ENCODE measurements at regions of chr12 and their contacts with region 1.

Region 1: DNA sequence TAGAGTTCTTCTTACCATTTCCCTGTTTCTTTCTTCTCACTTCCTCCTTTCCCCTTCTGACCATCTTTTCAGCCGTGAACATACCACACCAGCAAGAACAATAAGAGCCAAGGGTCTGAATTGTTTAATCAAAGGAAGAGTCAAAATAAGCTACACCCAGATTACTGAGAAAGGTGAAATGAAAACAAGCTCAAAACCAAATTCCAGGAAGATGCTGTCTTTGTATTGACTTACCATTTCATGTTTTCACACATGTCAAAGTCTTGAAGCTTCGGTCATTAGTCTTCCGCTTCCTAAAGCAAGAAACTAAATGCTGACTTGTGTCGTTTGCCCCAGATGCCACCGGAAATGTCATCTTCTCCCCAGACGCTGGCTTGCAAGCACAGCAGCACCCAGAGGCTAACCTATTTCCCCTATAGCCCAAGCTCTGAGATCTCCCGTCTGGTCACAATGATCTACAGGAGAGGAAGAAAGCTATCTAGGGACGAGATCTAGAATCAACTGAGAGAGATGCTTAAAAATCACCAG is 136.5 kb upstream of the AMIGO2 start:
- DNase-seq: peak; percentile 62 to 88
- ATAC-seq: peak; percentile 74 to 90 (median 86)
- H3K4me3 ChIP-seq: peak overlapping the region; percentile 69
- H3K4me3 Mint-ChIP-seq: peak overlapping the region; percentile 96
- H3K27ac ChIP-seq: peak overlapping the region; percentile 87
- H3K27ac Mint-ChIP-seq: peak overlapping the region; percentile 97 to 99
- H3K4me1 ChIP-seq: peaks cover 56% of the 10 kb centered on the region
- H3K4me1 Mint-ChIP-seq: peaks cover 74 to 79% of the 10 kb centered on the region in 2 donors
- H3K27me3 ChIP-seq: no peaks in the 10 kb centered on the region
- H3K27me3 Mint-ChIP-seq: no peaks in the 10 kb centered on the region
- CTCF ChIP-seq: no peak

Region 2: GRCh38 chr12:46217541-46218321 is 998.5 kb before region 1 on chr12:
- intact Hi-C with region 1: loop called (anchors 2 kb)
- DNase-seq: peak; percentile 57 to 85
- ATAC-seq: peak; percentile 11 to 55 (median 32)
- H3K4me3 ChIP-seq: peak overlapping the region; percentile 8
- H3K4me3 Mint-ChIP-seq: peak overlapping the region; percentile 85
- H3K27ac ChIP-seq: peak overlapping the region; percentile 87
- H3K27ac Mint-ChIP-seq: peak overlapping the region; percentile 97 to 98
- H3K4me1 ChIP-seq: peaks cover 54% of the 10 kb centered on the region
- H3K4me1 Mint-ChIP-seq: peaks cover 90 to 97% of the 10 kb centered on the region in 2 donors
- H3K27me3 ChIP-seq: no peaks in the 10 kb centered on the region
- H3K27me3 Mint-ChIP-seq: no peaks in the 10 kb centered on the region
- CTCF ChIP-seq: no peak

Region 3: DNA sequence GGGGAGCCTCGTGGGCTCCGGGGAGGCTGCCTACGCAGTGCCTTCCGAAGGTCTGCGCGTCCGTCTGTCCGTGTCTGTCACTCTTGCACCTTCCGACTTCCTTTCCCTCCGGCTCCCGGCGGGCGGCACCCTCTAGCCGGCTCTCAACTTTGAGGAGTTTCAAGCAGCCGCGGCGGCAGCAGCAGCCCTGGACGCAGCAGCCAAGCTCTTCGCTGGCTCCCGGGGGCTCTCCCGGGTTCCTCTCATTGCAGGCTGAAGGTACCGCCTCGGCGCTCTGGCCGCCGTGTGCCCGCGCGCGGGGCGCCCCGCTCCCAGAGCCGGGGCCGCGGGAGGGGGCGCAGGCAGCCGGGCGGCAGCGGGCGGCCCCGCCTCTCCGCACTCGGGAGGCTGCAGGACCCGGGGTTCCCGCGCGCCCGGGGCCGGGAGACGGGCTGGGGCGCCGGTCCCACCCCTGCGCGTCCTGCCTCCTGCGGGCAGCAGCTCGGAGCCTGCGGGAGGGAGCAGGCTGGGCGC is 136.7 kb before region 1 on chr12 and contains the starts of genes AMIGO2 and PCED1B:
- intact Hi-C with region 1: loop called (anchors 5 kb)
- DNase-seq: peak; percentile 47 to 73
- ATAC-seq: peak; percentile 47 to 67 (median 60)
- H3K4me3 ChIP-seq: peak within 1 kb of the TSS; percentile 94
- H3K4me3 Mint-ChIP-seq: peak within 1 kb of the TSS; percentile 100
- H3K27ac ChIP-seq: peak within 1 kb of the TSS; percentile 74
- H3K27ac Mint-ChIP-seq: peak within 1 kb of the TSS; percentile 82 to 95
- H3K4me1 ChIP-seq: peaks cover 18% of the 10 kb centered on the region
- H3K4me1 Mint-ChIP-seq: peaks cover 54% of the 10 kb centered on the region in 2 donors
- H3K27me3 ChIP-seq: no peaks in the 10 kb centered on the region
- H3K27me3 Mint-ChIP-seq: no peaks in the 10 kb centered on the region
- CTCF ChIP-seq: no peak
- total RNA-seq, gene AMIGO2: 8.0 to 9.9 (median 8.1) TPM
- total RNA-seq, gene PCED1B: 30.2 to 35.9 (median 33.3) TPM

Region 4: DNA sequence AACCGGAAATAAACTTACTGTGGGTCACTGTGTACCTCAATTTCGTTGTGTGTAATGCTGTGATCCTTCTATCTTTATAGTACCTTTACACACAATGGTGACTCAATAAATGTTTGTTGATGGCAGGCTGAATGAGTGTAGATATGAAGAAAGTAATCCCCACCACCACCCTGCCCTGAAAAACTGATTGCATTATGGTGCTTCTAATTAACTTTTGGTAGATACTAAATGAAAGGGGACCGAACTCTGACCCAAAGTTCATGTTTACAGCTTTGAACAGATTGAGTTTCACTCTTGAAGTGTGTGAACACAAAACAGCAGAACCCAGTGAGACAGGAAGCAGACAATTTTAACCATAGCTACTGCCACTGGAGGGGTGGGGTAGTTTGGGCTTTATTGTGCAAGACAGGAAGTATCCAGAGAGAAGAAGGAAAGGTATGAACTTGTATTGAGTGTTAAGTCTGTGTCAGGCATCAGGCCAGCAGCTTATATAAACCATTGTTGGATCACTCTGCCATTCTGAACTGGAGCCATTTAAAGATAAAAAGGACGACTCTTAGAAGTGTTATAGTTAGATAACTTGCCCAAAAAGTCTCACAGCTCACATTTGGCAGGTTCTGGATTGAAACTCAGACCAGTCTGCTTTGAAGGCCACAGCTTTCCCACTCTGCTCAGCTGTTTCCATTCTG is 60.6 kb after region 1 on chr12:
- intact Hi-C with region 1: loop called (anchors 5 kb)
- DNase-seq: peak; percentile 44 to 87
- ATAC-seq: peak; percentile 93 to 97 (median 97)
- H3K4me3 ChIP-seq: no peak overlapping the region
- H3K4me3 Mint-ChIP-seq: peak overlapping the region; percentile 60
- H3K27ac ChIP-seq: peak overlapping the region; percentile 89
- H3K27ac Mint-ChIP-seq: peak overlapping the region; percentile 86 to 94
- H3K4me1 ChIP-seq: peaks cover 22% of the 10 kb centered on the region
- H3K4me1 Mint-ChIP-seq: peaks cover 35 to 40% of the 10 kb centered on the region in 2 donors
- H3K27me3 ChIP-seq: no peaks in the 10 kb centered on the region
- H3K27me3 Mint-ChIP-seq: peaks cover 0 to 4% of the 10 kb centered on the region in 2 donors
- CTCF ChIP-seq: no peak

Region 5: DNA sequence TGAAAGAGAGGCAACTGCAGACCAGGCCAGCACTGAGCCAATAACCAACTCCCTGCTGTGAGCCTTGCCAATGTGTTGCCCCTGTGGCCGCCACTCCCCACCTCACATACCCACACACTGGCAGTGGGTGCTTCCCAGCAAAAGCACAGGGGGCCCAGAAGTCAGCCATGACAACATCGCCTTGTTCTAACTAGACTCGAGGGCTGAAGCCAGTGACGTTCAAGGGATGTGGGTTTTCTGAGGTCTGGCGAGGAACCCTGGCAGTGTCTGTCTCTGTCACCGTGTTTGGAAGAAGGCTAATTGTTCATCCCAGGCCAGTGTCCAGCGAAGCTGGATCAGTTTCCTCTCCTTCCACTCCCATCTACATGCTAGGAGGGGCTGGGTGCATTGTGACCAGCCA is 175.4 kb after region 1 on chr12:
- intact Hi-C with region 1: loop called (anchors 5 kb)
- DNase-seq: peak; percentile 60 to 86
- ATAC-seq: peak; percentile 80 to 90 (median 89)
- H3K4me3 ChIP-seq: no peak overlapping the region
- H3K4me3 Mint-ChIP-seq: peak overlapping the region; percentile 82
- H3K27ac ChIP-seq: peak overlapping the region; percentile 70
- H3K27ac Mint-ChIP-seq: peak overlapping the region; percentile 89 to 95
- H3K4me1 ChIP-seq: peaks cover 29% of the 10 kb centered on the region
- H3K4me1 Mint-ChIP-seq: peaks cover 42 to 46% of the 10 kb centered on the region in 2 donors
- H3K27me3 ChIP-seq: no peaks in the 10 kb centered on the region
- H3K27me3 Mint-ChIP-seq: no peaks in the 10 kb centered on the region
- CTCF ChIP-seq: no peak